ENCODE measurements at regions of chr17 and their contacts with region 1.

Region 1: GRCh38 chr17:7045909-7046724 is 2.2 kb upstream of the SLC16A11 start:
- DNase-seq: peak; percentile 77
- H3K4me3 Mint-ChIP-seq: no peak overlapping the region
- H3K27ac Mint-ChIP-seq: peak overlapping the region; percentile 32
- H3K4me1 Mint-ChIP-seq: peaks cover 11% of the 10 kb centered on the region
- H3K27me3 Mint-ChIP-seq: no peaks in the 10 kb centered on the region
- CTCF ChIP-seq: peak; percentile 79

Region 2: GRCh38 chr17:7035591-7036368 is 10.3 kb before region 1 on chr17 and contains the start of gene SLC16A13:
- CTCF ChIA-PET with region 1: interaction called, 12 read pairs
- POLR2A ChIA-PET with region 1: interaction called, 19 read pairs
- intact Hi-C with region 1: no loop called
- DNase-seq: peak; percentile 99
- H3K4me3 Mint-ChIP-seq: peak within 1 kb of the TSS; percentile 92
- H3K27ac Mint-ChIP-seq: peak within 1 kb of the TSS; percentile 92
- H3K4me1 Mint-ChIP-seq: peaks cover 21% of the 10 kb centered on the region
- H3K27me3 Mint-ChIP-seq: no peaks in the 10 kb centered on the region
- CTCF ChIP-seq: no peak
- total RNA-seq, gene SLC16A13: 7.5 and 11.1 TPM in 2 replicates

Region 3: GRCh38 chr17:7136266-7136877 is 90.3 kb after region 1 on chr17:
- CTCF ChIA-PET with region 1: interaction called, 124 read pairs
- POLR2A ChIA-PET with region 1: interaction called, 10 read pairs
- intact Hi-C with region 1: loop called (anchors 1 kb)
- DNase-seq: peak; percentile 69
- H3K4me3 Mint-ChIP-seq: no peak overlapping the region
- H3K27ac Mint-ChIP-seq: no peak overlapping the region
- H3K4me1 Mint-ChIP-seq: no peaks in the 10 kb centered on the region
- H3K27me3 Mint-ChIP-seq: peaks cover 16% of the 10 kb centered on the region
- CTCF ChIP-seq: peak; percentile 68

Region 4: GRCh38 chr17:7167832-7168231 is 121.7 kb after region 1 on chr17:
- CTCF ChIA-PET with region 1: interaction called, 17 read pairs
- POLR2A ChIA-PET with region 1: no interaction called
- intact Hi-C with region 1: no loop called
- DNase-seq: peak; percentile 51
- H3K4me3 Mint-ChIP-seq: no peak overlapping the region
- H3K27ac Mint-ChIP-seq: no peak overlapping the region
- H3K4me1 Mint-ChIP-seq: no peaks in the 10 kb centered on the region
- H3K27me3 Mint-ChIP-seq: no peaks in the 10 kb centered on the region
- CTCF ChIP-seq: no peak

Region 5: GRCh38 chr17:7186241-7186640 is 140.1 kb after region 1 on chr17:
- CTCF ChIA-PET with region 1: interaction called, 10 read pairs
- POLR2A ChIA-PET with region 1: no interaction called
- intact Hi-C with region 1: no loop called
- DNase-seq: no peak
- H3K4me3 Mint-ChIP-seq: no peak overlapping the region
- H3K27ac Mint-ChIP-seq: no peak overlapping the region
- H3K4me1 Mint-ChIP-seq: peaks cover 6% of the 10 kb centered on the region
- H3K27me3 Mint-ChIP-seq: no peaks in the 10 kb centered on the region
- CTCF ChIP-seq: no peak

Region 6: DNA sequence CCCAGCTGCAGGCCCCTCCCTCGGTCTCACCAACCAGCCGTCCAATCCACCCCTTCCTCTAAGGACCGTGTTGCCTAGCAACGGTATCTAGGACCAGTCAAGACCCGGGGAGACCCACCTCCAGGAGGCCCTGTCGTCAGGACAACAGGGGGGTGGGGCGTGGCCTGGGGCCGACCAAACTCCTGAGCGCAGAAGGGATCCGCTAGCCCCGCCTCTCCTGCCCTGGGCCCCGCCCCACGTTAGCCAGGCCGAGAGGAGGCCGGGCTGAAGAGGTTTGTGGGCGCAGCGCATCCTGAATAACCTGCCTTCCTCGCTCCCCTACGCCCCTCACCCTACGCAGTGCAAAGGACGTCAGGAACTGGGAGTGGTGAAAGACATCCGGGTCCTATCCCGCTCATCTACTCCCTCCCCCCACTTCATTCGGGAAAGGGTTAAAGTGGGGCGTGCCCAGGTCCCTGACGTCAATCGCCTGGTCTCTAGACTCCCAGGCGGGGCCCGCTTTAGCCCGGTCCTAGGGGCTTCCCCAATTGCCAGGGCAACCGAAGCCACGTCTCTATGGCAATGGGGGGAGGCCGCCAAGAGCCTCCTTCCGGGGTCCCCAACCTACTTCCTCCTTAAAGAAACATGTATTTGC is 158.8 kb after region 1 on chr17:
- CTCF ChIA-PET with region 1: no interaction called
- POLR2A ChIA-PET with region 1: no interaction called
- intact Hi-C with region 1: no loop called
- DNase-seq: no peak
- H3K4me3 Mint-ChIP-seq: no peak overlapping the region
- H3K27ac Mint-ChIP-seq: no peak overlapping the region
- H3K4me1 Mint-ChIP-seq: no peaks in the 10 kb centered on the region
- H3K27me3 Mint-ChIP-seq: peaks cover 18% of the 10 kb centered on the region
- CTCF ChIP-seq: no peak